ENCODE measurements at regions of chr2 and their contacts with region 1.

Region 1: DNA sequence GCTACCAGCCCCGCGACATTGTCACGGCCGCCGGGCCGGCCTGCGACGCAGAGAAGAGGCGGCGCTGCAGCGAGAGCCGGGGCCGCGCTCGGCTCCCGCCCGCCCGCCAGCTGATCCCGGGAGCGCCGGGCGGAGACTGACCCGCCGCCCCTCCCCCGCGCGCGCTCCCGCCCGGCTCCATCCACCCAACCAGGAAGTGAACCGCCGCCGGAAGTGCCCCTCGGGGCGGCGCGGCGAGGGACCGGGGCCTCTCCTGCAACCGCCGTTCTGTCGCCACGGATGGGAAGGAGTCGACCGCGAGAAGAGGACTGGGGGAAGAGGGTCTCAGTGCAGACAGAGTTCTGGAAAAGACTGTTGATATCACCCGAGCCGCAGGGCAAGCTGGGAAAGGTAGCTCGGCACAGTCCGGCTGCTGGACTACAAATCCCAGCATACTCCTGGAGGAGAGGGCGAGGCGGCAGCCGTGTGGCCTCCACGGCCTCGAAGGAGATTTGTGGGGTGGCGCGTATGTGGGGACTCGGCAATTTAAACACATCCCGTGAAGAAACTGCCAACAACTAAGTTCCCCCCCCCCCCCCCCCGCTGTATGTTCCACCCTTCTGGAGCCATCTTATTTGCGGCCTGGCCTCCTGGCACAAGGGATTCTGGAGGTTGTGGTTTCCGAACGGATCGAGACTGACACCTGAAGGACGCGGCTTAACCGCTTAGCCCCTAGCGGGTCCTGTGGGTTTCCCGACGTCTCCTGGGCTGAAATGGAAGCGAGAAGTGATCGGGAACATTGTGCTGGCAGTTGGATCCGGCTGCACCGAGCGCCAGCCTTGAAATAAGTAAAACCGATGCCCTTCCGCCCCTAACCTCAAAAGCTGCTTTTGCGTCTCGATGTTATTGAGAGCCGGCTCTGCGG is at the start of gene AAK1:
- DNase-seq: peak; percentile 94
- ATAC-seq: peak; percentile 90 to 94 (median 91)
- H3K4me3 ChIP-seq: peak within 1 kb of the TSS; percentile 99
- H3K27ac ChIP-seq: peak within 1 kb of the TSS; percentile 97
- H3K4me1 ChIP-seq: peaks cover 43% of the 10 kb centered on the region
- H3K27me3 ChIP-seq: no peaks in the 10 kb centered on the region
- CTCF ChIP-seq: no peak
- total RNA-seq, gene AAK1: 52.5 to 95.2 (median 65.0) TPM

Region 2: DNA sequence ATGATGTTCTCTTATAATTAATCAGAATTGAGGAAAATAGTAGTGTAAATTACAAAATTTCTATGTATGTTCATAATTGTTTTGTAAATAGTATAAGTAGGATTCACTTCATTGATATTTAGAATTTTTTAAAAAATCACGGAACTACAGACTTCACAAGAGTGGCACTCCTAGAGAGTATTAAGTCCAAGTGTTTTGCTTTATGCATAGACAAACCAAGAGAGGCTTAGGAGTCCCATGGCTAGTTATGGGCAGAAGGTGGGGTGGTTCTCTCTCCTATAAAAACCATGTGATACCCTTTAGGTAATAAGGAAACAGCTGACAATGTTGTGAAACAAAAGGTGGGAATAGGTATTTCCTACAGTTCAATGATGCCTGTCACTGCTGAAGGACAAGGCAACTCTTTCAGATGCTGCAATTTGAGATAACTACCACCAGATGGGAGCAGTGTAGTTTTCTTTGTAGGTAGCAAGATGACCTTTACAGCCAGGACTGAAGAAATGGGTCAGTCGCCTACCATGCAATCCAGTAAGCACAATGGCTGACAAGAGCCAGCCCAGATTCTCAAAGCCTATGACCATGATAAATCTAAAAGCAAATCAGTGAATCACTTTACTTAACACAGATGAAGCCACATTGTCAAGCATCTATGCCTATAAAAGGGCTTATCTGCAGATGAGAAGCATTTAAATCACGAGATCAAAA is 84.3 kb before region 1 on chr2:
- intact Hi-C with region 1: loop called in 1 of 2 experiments (anchors 5 kb)
- DNase-seq: no peak
- ATAC-seq: peak; percentile 90 to 95 (median 93)
- H3K4me3 ChIP-seq: peak overlapping the region; percentile 4
- H3K27ac ChIP-seq: peak overlapping the region; percentile 19
- H3K4me1 ChIP-seq: peaks cover 43% of the 10 kb centered on the region
- H3K27me3 ChIP-seq: no peaks in the 10 kb centered on the region
- CTCF ChIP-seq: peak; percentile 76

Region 3: DNA sequence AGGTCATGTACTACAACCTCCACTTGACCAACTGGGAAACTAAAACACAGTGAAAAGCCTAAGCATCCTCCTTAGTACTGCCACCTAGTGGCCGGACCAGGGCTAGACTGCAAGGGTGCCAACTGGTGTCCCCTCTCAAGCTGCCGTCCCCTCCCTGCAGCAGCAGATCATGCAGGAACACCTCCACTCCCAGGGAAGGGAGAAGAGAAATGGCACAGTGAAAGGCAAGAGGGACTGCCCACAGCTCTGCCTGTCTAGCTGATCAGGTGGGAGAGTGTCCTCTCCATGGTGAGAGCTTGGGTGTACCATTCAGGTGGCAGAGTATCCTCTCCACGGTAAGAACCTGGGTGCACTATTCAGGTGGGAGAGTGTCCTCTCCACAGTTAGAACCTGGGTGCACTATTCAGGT is 78.4 kb before region 1 on chr2:
- intact Hi-C with region 1: loop called (anchors 5 kb)
- DNase-seq: peak; percentile 62 to 65
- ATAC-seq: peak; percentile 35 to 63 (median 62)
- H3K4me3 ChIP-seq: no peak overlapping the region
- H3K27ac ChIP-seq: no peak overlapping the region
- H3K4me1 ChIP-seq: peaks cover 44% of the 10 kb centered on the region
- H3K27me3 ChIP-seq: no peaks in the 10 kb centered on the region
- CTCF ChIP-seq: peak; percentile 53

Region 4: GRCh38 chr2:69577467-69578197 is 66.2 kb before region 1 on chr2:
- intact Hi-C with region 1: loop called in 1 of 2 experiments (anchors 5 kb)
- DNase-seq: peak; percentile 45 to 49
- ATAC-seq: peak; percentile 89 to 93 (median 91)
- H3K4me3 ChIP-seq: peak overlapping the region; percentile 38
- H3K27ac ChIP-seq: peak overlapping the region; percentile 81
- H3K4me1 ChIP-seq: peaks cover 74% of the 10 kb centered on the region
- H3K27me3 ChIP-seq: no peaks in the 10 kb centered on the region
- CTCF ChIP-seq: no peak

Region 5: DNA sequence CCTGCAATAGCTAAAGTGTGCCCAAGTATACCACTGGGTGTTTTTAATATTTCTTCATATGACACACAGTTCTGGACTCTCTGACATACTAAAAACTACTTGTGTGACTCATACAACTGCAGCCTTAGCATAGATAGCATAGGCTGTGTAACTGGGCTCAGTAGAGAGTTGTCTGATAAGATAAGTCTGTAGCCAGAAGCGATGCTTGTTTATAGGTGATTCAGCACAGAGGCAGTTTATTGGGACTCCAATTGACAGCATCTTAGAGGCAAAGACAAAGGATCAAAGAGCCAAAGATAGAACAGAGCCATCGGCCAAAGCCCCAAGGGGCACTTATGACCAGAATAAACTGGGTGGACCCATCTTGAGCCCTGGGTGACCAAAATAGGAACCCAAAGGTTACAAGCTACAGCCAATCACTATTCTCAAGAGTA is 42.7 kb before region 1 on chr2:
- intact Hi-C with region 1: loop called in 1 of 2 experiments (anchors 5 kb)
- DNase-seq: no peak
- ATAC-seq: peak; percentile 81 to 94 (median 90)
- H3K4me3 ChIP-seq: no peak overlapping the region
- H3K27ac ChIP-seq: peak overlapping the region; percentile 67
- H3K4me1 ChIP-seq: peaks cover 44% of the 10 kb centered on the region
- H3K27me3 ChIP-seq: no peaks in the 10 kb centered on the region
- CTCF ChIP-seq: no peak

Region 6: DNA sequence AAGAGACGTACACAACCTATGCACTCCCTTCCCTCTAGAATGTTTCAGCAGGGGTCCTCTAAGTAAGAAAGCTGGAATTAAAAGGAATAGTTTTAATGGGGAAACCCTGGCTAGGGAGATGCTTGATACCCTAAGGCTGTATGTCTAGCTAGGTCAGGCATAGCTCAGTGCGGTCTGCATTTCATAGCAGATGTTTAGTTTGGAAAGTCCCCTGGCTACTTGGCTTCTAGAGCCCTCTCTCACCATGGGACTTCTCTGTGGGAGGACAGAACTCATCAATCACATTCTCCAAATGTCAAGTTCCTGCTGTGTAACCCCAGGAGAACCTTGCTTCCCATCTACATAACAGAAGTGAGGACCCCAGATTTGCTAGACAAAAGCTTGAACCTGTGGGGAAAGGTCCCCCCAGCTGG is 74.0 kb after region 1 on chr2:
- intact Hi-C with region 1: loop called in 1 of 2 experiments (anchors 5 kb)
- DNase-seq: no peak
- ATAC-seq: no peak
- H3K4me3 ChIP-seq: no peak overlapping the region
- H3K27ac ChIP-seq: no peak overlapping the region
- H3K4me1 ChIP-seq: peaks cover 3% of the 10 kb centered on the region
- H3K27me3 ChIP-seq: no peaks in the 10 kb centered on the region
- CTCF ChIP-seq: no peak

Measured in psoas muscle (tissue), 8 donors.